ENCODE measurements at regions of chr3 and their contacts with region 1.

Region 1: GRCh38 chr3:45656575-45657363 is 32.4 kb upstream of the SACM1L start:
- DNase-seq: peak; percentile 84 to 85
- H3K4me3 ChIP-seq: no peak overlapping the region
- H3K27ac ChIP-seq: peak overlapping the region; percentile 43; the same call in 1 of the 2 replicates
- H3K4me1 ChIP-seq: peaks cover 10% of the 10 kb centered on the region
- H3K27me3 ChIP-seq: no peaks in the 10 kb centered on the region
- CTCF ChIP-seq: peak; percentile 89

Region 2: DNA sequence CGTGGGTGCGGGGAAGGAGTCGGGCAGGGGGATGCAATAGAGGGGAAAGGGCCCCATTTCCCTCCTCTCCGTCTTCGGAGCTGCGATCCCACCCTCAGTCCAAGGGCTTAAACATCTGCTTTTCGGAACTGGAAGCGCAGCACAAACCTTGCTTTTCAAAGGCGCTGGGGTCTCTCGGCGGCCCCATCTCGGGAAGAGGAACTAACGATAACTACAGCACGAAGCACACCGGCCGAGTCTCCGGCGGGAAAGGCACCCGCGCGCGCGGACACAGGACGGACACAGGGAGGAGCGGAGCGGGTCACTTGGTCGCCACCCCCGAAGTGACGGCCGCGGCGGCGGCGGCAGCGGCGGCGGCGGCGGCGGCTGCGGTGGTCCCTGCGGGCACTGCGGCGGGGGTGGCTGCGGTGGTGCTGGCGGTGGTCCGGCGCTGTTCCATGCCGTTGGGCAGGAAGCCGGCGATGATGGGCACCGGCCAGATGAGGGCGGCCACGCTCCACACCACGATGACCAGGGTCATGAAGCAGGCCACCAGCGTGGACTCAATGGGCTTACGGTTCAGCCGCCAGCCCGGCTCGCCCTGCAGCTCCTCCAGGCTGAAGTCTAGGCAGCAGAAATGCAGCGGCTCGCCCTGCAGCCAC is 431.8 kb before region 1 on chr3:
- CTCF ChIA-PET with region 1: no interaction called
- POLR2A ChIA-PET with region 1: no interaction called
- intact Hi-C with region 1: loop called (anchors 2 kb)
- DNase-seq: peak in 1 of 2 experiments; percentile 78
- H3K4me3 ChIP-seq: peak overlapping the region; percentile 76
- H3K27ac ChIP-seq: peak overlapping the region; percentile 64; the same call in 1 of the 2 replicates
- H3K4me1 ChIP-seq: peaks cover 30% of the 10 kb centered on the region
- H3K27me3 ChIP-seq: no peaks in the 10 kb centered on the region
- CTCF ChIP-seq: peak; percentile 39

Region 3: DNA sequence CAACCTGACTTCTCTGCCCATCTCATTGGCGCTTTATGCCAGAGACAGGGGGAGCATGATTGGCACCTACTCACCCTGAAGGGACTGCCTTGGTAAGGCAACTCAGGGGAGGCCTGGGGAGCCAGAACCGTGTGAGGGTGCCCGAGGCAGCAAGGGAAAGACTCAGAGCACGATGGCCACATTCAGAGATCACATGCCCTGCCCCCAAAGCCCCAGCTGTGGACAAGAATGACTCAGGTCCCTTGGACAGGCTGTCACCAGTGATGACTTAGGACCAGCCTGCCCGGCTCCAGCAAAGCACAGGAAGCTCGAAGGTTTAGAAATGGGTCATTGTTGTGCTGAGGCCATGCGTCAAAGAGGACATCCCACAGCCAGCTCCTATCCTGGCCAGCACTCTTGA is 111.3 kb before region 1 on chr3:
- CTCF ChIA-PET with region 1: interaction called, 12 read pairs
- POLR2A ChIA-PET with region 1: no interaction called
- intact Hi-C with region 1: loop called (anchors 1 kb)
- DNase-seq: peak; percentile 28 to 40
- H3K4me3 ChIP-seq: no peak overlapping the region
- H3K27ac ChIP-seq: no peak overlapping the region
- H3K4me1 ChIP-seq: peaks cover 3% of the 10 kb centered on the region; the same call in 1 of the 2 replicates
- H3K27me3 ChIP-seq: no peaks in the 10 kb centered on the region
- CTCF ChIP-seq: no peak

Region 4: DNA sequence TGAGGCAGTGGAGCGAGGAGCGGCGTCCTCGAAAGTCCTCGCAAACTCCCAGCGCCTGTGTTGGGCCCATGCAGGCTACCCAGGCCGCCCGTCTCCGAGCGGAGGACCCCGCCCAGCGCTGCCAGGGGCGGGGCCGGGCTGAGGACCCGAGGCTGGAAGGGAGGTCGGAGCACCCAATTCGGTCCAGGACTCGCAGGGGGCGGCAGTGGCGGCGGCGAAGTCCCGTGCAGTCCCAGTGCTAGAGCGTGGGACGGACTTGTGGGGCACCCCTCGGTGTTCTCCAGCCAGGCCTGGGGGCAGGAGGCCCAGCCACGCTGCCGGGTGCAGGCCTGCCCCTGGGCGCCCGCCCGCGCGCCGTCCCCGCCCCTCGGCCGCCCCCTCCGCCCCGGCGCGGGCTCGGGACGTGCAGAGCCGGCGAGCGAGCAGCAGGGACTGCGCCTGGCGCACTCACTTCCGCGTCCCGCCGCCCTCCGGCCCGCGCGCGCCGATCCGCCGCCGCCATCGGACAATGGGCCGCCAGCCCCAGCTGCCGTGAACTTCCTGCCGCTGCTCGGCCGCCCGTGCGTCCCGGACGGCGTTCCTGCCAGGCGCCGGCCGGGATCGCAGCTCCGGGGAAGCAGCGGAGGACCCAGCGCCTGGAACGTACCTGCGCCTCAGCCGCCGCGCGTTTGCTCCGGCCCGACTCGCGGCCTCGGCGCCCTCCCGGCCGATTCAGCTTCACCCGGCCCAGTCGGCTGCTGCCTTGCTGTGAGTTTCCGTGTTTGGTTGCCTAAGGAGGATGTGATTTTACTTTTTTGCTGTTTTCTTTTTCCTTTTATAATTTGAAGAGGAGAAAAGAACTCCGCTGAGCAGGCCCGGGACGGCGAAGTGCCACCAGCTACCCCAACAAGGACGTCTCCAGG is 62.8 kb before region 1 on chr3:
- CTCF ChIA-PET with region 1: interaction called, 7 read pairs
- POLR2A ChIA-PET with region 1: interaction called, 11 read pairs
- intact Hi-C with region 1: loop called (anchors 1 kb)
- DNase-seq: peak; percentile 51 to 84
- H3K4me3 ChIP-seq: peak overlapping the region; percentile 64
- H3K27ac ChIP-seq: peak overlapping the region; percentile 41; the same call in 1 of the 2 replicates
- H3K4me1 ChIP-seq: peaks cover 39% of the 10 kb centered on the region
- H3K27me3 ChIP-seq: no peaks in the 10 kb centered on the region
- CTCF ChIP-seq: no peak

Region 5: GRCh38 chr3:46372492-46373359 is 716.0 kb after region 1 on chr3:
- CTCF ChIA-PET with region 1: interaction called, 13 read pairs
- POLR2A ChIA-PET with region 1: no interaction called
- intact Hi-C with region 1: no loop called
- DNase-seq: no peak
- H3K4me3 ChIP-seq: no peak overlapping the region
- H3K27ac ChIP-seq: no peak overlapping the region
- H3K4me1 ChIP-seq: peaks cover 19% of the 10 kb centered on the region
- H3K27me3 ChIP-seq: no peaks in the 10 kb centered on the region
- CTCF ChIP-seq: peak; percentile 76